GM12878 (cell line): ENCODE measurements at regions of chr4 and their contacts with region 1.

Region 1: GRCh38 chr4:142353149-142353738 is 492.9 kb downstream of the INPP4B start:
- DNase-seq: no peak
- ATAC-seq: peak; percentile 41
- H3K4me3 ChIP-seq: no peak overlapping the region
- H3K27ac ChIP-seq: no peak overlapping the region
- H3K4me1 ChIP-seq: no peaks in the 10 kb centered on the region
- H3K27me3 ChIP-seq: no peaks in the 10 kb centered on the region
- CTCF ChIP-seq: peak; percentile 68 to 76 (median 72)
- EP300 ChIP-seq: no peak
- POLR2A ChIP-seq: no peak
- RAD21 ChIP-seq: peak; percentile 73

Region 2: DNA sequence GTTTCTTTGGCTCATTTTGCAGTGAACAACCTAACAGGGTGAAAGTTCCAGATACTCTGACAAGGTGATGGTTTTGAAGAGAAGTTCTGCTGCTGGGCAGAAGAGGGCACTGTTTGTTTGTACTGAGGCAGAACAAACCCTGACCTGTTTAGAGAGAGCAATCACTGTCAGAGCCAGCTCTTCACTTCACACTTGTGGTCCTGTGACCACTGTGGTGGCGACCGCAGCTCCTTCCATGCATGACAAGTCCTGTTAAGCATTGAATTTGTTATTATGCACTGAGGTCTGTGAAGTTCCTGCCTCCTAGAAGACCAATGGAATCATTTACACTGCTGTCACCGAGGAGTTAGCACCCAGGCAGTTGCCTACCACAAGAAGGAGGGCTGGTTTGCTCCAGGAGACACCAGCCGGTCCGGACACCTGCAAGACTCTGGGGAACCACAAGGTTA is 1046.0 kb before region 1 on chr4:
- CTCF ChIA-PET with region 1: interaction called, 7 read pairs
- POLR2A ChIA-PET with region 1: no interaction called
- RAD21 ChIA-PET with region 1: interaction called, 3 read pairs
- SMC1A ChIA-PET with region 1: no interaction called
- in situ Hi-C with region 1: no loop called
- intact Hi-C with region 1: loop called (anchors 5 kb)
- DNase-seq: peak; percentile 95
- ATAC-seq: peak; percentile 99
- H3K4me3 ChIP-seq: no peak overlapping the region
- H3K27ac ChIP-seq: no peak overlapping the region
- H3K4me1 ChIP-seq: peaks cover 25% of the 10 kb centered on the region
- H3K27me3 ChIP-seq: no peaks in the 10 kb centered on the region
- CTCF ChIP-seq: peak; percentile 86 to 89 (median 86)
- EP300 ChIP-seq: peak; percentile 89 to 90
- POLR2A ChIP-seq: no peak
- RAD21 ChIP-seq: peak; percentile 96

Region 3: DNA sequence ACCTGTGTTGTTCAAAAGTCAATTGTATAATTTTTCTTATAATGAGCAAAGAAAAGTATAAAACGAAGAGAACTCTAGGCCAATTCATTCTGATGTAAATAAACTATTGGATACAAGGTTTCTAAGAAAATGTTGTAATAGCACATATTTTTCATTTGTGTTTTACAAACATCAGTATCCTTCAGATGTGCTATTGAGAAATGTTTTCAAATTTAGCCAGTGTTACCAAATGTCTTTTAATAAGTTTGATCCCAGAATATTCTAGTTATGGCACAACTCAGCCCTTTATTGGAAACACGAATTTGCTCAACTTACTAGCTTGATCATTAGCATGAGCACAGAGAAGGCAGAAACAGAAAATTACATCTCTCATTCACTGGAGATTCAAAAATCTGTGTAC is 397.5 kb before region 1 on chr4:
- CTCF ChIA-PET with region 1: no interaction called
- POLR2A ChIA-PET with region 1: no interaction called
- RAD21 ChIA-PET with region 1: no interaction called
- SMC1A ChIA-PET with region 1: no interaction called
- in situ Hi-C with region 1: no loop called
- intact Hi-C with region 1: no loop called
- DNase-seq: no peak
- ATAC-seq: no peak
- H3K4me3 ChIP-seq: no peak overlapping the region
- H3K27ac ChIP-seq: no peak overlapping the region
- H3K4me1 ChIP-seq: no peaks in the 10 kb centered on the region
- H3K27me3 ChIP-seq: no peaks in the 10 kb centered on the region
- CTCF ChIP-seq: no peak
- EP300 ChIP-seq: no peak
- POLR2A ChIP-seq: no peak
- RAD21 ChIP-seq: no peak

Region 4: GRCh38 chr4:142339053-142339452 is 14.2 kb before region 1 on chr4:
- CTCF ChIA-PET with region 1: interaction called, 50 read pairs
- POLR2A ChIA-PET with region 1: interaction called, 3 read pairs
- RAD21 ChIA-PET with region 1: interaction called, 20 read pairs
- SMC1A ChIA-PET with region 1: interaction called, 63 read pairs
- in situ Hi-C with region 1: no loop called
- intact Hi-C with region 1: no loop called
- DNase-seq: no peak
- ATAC-seq: peak; percentile 30; the same call in 2 of the 3 replicates
- H3K4me3 ChIP-seq: no peak overlapping the region
- H3K27ac ChIP-seq: no peak overlapping the region
- H3K4me1 ChIP-seq: no peaks in the 10 kb centered on the region
- H3K27me3 ChIP-seq: no peaks in the 10 kb centered on the region
- CTCF ChIP-seq: no peak
- EP300 ChIP-seq: no peak
- POLR2A ChIP-seq: no peak
- RAD21 ChIP-seq: no peak

Region 5: GRCh38 chr4:142405021-142405694 is 51.9 kb after region 1 on chr4:
- CTCF ChIA-PET with region 1: interaction called, 135 read pairs
- POLR2A ChIA-PET with region 1: interaction called, 4 read pairs
- RAD21 ChIA-PET with region 1: interaction called, 26 read pairs
- SMC1A ChIA-PET with region 1: interaction called, 68 read pairs
- in situ Hi-C with region 1: no loop called
- intact Hi-C with region 1: no loop called
- DNase-seq: peak; percentile 57
- ATAC-seq: peak; percentile 58
- H3K4me3 ChIP-seq: 0 out of 2 replicates have a peak overlapping the region, but pooled peaks have one; percentile 49
- H3K27ac ChIP-seq: no peak overlapping the region
- H3K4me1 ChIP-seq: no peaks in the 10 kb centered on the region; the same call in 1 of the 2 replicates
- H3K27me3 ChIP-seq: no peaks in the 10 kb centered on the region
- CTCF ChIP-seq: no peak
- EP300 ChIP-seq: 0 out of 4 replicates have a peak, but pooled peaks of 1 of the 2 experiments have one; percentile 30
- POLR2A ChIP-seq: no peak
- RAD21 ChIP-seq: no peak

Region 6: GRCh38 chr4:142535009-142535408 is 181.8 kb after region 1 on chr4:
- CTCF ChIA-PET with region 1: interaction called, 19 read pairs
- POLR2A ChIA-PET with region 1: interaction called, 4 read pairs
- RAD21 ChIA-PET with region 1: interaction called, 3 read pairs
- SMC1A ChIA-PET with region 1: interaction called, 9 read pairs
- in situ Hi-C with region 1: no loop called
- intact Hi-C with region 1: no loop called
- DNase-seq: no peak
- ATAC-seq: peak; percentile 53
- H3K4me3 ChIP-seq: no peak overlapping the region
- H3K27ac ChIP-seq: no peak overlapping the region
- H3K4me1 ChIP-seq: no peaks in the 10 kb centered on the region
- H3K27me3 ChIP-seq: no peaks in the 10 kb centered on the region
- CTCF ChIP-seq: no peak
- EP300 ChIP-seq: no peak
- POLR2A ChIP-seq: no peak
- RAD21 ChIP-seq: no peak

Region 7: GRCh38 chr4:142574306-142574705 is 221.1 kb after region 1 on chr4:
- CTCF ChIA-PET with region 1: interaction called, 119 read pairs
- POLR2A ChIA-PET with region 1: interaction called, 3 read pairs
- RAD21 ChIA-PET with region 1: interaction called, 133 read pairs
- SMC1A ChIA-PET with region 1: interaction called, 120 read pairs
- in situ Hi-C with region 1: no loop called
- intact Hi-C with region 1: loop called (anchors 5 kb)
- DNase-seq: no peak
- ATAC-seq: peak; percentile 80
- H3K4me3 ChIP-seq: no peak overlapping the region
- H3K27ac ChIP-seq: no peak overlapping the region
- H3K4me1 ChIP-seq: no peaks in the 10 kb centered on the region
- H3K27me3 ChIP-seq: no peaks in the 10 kb centered on the region
- CTCF ChIP-seq: no peak
- EP300 ChIP-seq: no peak
- POLR2A ChIP-seq: no peak
- RAD21 ChIP-seq: no peak

Region 8: GRCh38 chr4:142846729-142847596 is 493.7 kb after region 1 on chr4:
- CTCF ChIA-PET with region 1: no interaction called
- POLR2A ChIA-PET with region 1: no interaction called
- RAD21 ChIA-PET with region 1: no interaction called
- SMC1A ChIA-PET with region 1: interaction called, 3 read pairs
- in situ Hi-C with region 1: loop called (anchors 10 kb)
- intact Hi-C with region 1: no loop called
- DNase-seq: no peak
- ATAC-seq: peak; percentile 90
- H3K4me3 ChIP-seq: no peak overlapping the region
- H3K27ac ChIP-seq: no peak overlapping the region
- H3K4me1 ChIP-seq: no peaks in the 10 kb centered on the region
- H3K27me3 ChIP-seq: peaks cover 4 to 6% of the 10 kb centered on the region in 2 experiments; a peak in 2 of 4 replicates
- CTCF ChIP-seq: peak; percentile 31 to 46 (median 31); a peak in 5 of 6 replicates
- EP300 ChIP-seq: no peak
- POLR2A ChIP-seq: no peak
- RAD21 ChIP-seq: peak; percentile 51